Endothelial cell of umbilical vein (primary cell): ENCODE measurements at regions of chr22 and their contacts with region 1.

Region 1: DNA sequence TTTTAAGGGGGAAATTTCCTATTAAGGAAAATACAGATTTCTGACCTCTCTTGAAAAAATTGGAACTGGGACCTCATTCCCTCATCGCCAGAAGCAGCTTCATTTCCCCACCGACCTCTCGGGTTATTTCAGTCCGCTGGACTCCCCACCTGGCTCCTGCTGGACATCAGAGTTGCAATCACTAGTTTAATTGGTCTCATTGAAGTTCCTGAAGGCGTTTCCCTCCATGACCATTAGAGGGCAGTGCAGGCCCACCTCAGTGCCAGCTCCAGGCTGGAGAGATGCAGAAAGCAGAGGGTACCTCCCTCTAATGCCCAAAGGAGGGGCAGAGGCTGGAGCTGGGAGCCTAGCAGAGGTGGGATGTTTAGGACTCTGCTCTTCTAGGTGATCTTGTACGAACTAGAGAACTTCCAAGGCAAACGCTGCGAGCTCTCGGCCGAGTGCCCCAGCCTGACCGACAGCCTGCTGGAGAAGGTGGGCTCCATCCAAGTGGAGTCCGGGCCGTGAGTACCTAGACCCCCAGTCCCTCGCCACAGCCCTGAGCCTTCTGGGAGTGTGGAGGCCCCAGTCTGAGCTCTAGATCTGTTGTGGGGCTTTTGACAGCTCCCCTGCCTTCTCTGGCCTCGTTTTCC is 2.7 kb downstream of the CRYBB3 start:
- DNase-seq: peak; percentile 69
- H3K4me3 ChIP-seq: no peak overlapping the region
- H3K27ac ChIP-seq: no peak overlapping the region
- H3K4me1 ChIP-seq: no peaks in the 10 kb centered on the region
- H3K27me3 ChIP-seq: no peaks in the 10 kb centered on the region
- CTCF ChIP-seq: peak; percentile 82 to 87
- POLR2A ChIP-seq: no peak

Region 2: GRCh38 chr22:25182131-25183110 is 20.0 kb before region 1 on chr22:
- CTCF ChIA-PET with region 1: interaction called, 23 read pairs
- POLR2A ChIA-PET with region 1: no interaction called
- dilution Hi-C with region 1: no loop called
- intact Hi-C with region 1: no loop called
- DNase-seq: no peak
- H3K4me3 ChIP-seq: no peak overlapping the region
- H3K27ac ChIP-seq: no peak overlapping the region
- H3K4me1 ChIP-seq: no peaks in the 10 kb centered on the region
- H3K27me3 ChIP-seq: no peaks in the 10 kb centered on the region
- CTCF ChIP-seq: no peak
- POLR2A ChIP-seq: no peak

Region 3: DNA sequence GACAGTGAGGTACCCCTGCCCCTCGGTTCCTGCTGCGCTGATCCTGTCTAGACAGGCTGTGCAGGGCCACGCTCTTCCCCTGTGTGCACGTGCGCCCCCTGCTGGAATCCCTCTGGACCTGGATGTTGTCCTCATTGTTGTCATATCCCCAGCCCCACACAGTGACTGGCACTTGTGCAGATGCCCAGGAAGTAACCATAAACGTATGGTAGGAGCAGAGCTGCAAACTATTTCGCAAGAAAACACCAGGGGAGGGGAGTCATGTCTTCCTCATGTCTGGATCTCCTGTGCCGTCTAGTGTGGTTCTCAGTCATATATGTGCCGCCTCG is 131.7 kb after region 1 on chr22:
- CTCF ChIA-PET with region 1: interaction called, 14 read pairs
- POLR2A ChIA-PET with region 1: no interaction called
- dilution Hi-C with region 1: no loop called
- intact Hi-C with region 1: loop called (anchors 1 kb)
- DNase-seq: peak; percentile 44
- H3K4me3 ChIP-seq: no peak overlapping the region
- H3K27ac ChIP-seq: no peak overlapping the region
- H3K4me1 ChIP-seq: no peaks in the 10 kb centered on the region
- H3K27me3 ChIP-seq: peaks cover 0 to 2% of the 10 kb centered on the region in 2 experiments
- CTCF ChIP-seq: peak; percentile 68 to 75
- POLR2A ChIP-seq: no peak